OCI-LY7 (cell line): ENCODE measurements at regions of chr17 and their contacts with region 1.

Region 1: GRCh38 chr17:7239091-7240027 is at the start of gene PHF23:
- DNase-seq: peak; percentile 99
- H3K4me3 ChIP-seq: peak within 1 kb of the TSS; percentile 100
- H3K27ac ChIP-seq: peak within 1 kb of the TSS; percentile 86
- H3K4me1 ChIP-seq: peaks cover 60% of the 10 kb centered on the region
- CTCF ChIP-seq: 0 out of 2 replicates have a peak, but pooled peaks have one; percentile 9
- total RNA-seq, gene PHF23: 47.7 and 50.8 TPM in 2 replicates

Region 2: DNA sequence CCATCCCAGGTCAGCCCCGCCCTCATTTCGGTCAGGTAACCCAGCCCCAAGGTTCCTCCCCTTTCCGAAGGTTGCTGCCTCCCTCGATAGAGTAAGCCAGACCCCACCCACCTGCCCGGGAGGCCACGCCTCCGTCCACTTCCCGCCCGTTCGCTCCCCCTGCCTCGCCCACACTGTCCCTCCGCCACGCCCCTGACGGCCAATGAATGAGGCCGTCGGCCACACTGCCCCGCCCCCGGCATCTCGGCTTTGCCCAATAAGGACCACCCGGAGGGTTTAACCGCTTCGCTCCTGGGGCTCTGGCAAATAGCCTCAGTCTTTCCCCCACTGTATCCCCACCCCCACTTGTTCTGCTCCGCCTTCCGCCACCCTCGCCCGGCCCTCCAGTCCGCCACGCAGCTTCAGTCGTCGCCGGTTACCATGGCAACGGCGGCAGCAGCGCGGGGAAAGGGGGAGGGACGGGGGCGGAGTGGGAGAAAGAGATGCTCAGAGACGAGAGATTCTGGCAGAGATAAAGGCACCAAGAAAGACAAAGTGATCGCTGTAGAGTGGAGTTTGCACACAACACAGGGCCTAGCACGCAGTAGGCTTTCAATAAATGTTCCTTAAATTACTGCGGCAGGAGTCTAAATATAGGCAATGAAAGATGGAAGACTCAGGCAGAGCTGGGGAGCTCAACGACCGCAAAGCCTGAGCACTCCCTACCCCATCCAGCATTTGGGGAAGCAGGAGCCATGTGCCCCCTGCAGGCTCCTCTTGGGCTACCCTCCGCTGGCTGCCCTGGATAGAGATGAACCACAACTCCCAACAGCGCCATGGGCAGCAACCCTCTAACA is 24.8 kb before region 1 on chr17:
- CTCF ChIA-PET with region 1: no interaction called
- POLR2A ChIA-PET with region 1: interaction called, 3 read pairs
- intact Hi-C with region 1: loop called (anchors 2 kb)
- DNase-seq: peak; percentile 99
- H3K4me3 ChIP-seq: peak overlapping the region; percentile 75
- H3K27ac ChIP-seq: peak overlapping the region; percentile 65
- H3K4me1 ChIP-seq: peaks cover 52% of the 10 kb centered on the region
- CTCF ChIP-seq: peak; percentile 74